Activated naive CD4-positive, alpha-beta T cell treated with anti-CD3 and anti-CD28 coated beads, Interleukin-2, amount 10 ng/mL, durations not matched to agents 7 days and 5 days (primary cell): ENCODE measurements at regions of chr10 and their contacts with region 1.

Region 1: DNA sequence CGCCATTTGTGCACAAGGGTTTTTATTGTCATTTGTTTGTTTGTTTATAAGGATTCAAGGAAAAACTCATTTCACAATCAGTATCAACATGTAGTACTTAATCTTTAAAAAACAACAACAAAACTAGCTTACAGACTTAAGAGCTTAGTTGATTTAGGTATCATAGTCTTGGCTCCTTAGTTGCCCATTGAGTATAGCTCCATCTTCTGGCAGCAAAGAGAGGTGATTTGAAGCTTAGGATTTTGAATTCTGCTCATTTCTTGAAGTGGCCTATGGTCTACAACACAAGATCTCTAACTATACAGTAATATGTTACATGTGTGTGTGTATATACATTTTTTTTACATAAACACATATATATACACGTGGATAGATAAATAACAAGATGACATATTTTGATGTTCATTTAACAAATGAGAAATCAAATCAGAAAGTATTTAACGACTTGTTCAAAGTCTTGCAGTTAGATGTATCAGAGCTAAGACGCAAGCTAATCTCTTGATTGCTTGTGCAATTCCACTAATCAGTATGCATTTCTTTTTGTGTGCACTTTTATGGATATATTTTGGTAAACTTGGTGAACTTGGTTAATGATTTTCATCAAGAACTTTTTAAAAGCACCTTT is 307.3 kb downstream of the CAMK1D start:
- DNase-seq: no peak
- H3K4me3 Mint-ChIP-seq: no peak overlapping the region
- H3K27ac Mint-ChIP-seq: no peak overlapping the region
- H3K4me1 Mint-ChIP-seq: peaks cover 3% of the 10 kb centered on the region
- H3K27me3 Mint-ChIP-seq: no peaks in the 10 kb centered on the region

Region 2: GRCh38 chr10:12214763-12215218 is 441.8 kb before region 1 on chr10:
- CTCF ChIA-PET with region 1: interaction called, 14 read pairs
- DNase-seq: peak; percentile 49
- H3K4me3 Mint-ChIP-seq: peak overlapping the region; percentile 27
- H3K27ac Mint-ChIP-seq: peak overlapping the region; percentile 74
- H3K4me1 Mint-ChIP-seq: peaks cover 7% of the 10 kb centered on the region
- H3K27me3 Mint-ChIP-seq: no peaks in the 10 kb centered on the region

Region 3: GRCh38 chr10:12264204-12264940 is 392.3 kb before region 1 on chr10:
- CTCF ChIA-PET with region 1: interaction called, 69 read pairs
- DNase-seq: peak; percentile 75
- H3K4me3 Mint-ChIP-seq: peak overlapping the region; percentile 29
- H3K27ac Mint-ChIP-seq: no peak overlapping the region
- H3K4me1 Mint-ChIP-seq: peaks cover 24% of the 10 kb centered on the region
- H3K27me3 Mint-ChIP-seq: peaks cover 5% of the 10 kb centered on the region

Region 4: DNA sequence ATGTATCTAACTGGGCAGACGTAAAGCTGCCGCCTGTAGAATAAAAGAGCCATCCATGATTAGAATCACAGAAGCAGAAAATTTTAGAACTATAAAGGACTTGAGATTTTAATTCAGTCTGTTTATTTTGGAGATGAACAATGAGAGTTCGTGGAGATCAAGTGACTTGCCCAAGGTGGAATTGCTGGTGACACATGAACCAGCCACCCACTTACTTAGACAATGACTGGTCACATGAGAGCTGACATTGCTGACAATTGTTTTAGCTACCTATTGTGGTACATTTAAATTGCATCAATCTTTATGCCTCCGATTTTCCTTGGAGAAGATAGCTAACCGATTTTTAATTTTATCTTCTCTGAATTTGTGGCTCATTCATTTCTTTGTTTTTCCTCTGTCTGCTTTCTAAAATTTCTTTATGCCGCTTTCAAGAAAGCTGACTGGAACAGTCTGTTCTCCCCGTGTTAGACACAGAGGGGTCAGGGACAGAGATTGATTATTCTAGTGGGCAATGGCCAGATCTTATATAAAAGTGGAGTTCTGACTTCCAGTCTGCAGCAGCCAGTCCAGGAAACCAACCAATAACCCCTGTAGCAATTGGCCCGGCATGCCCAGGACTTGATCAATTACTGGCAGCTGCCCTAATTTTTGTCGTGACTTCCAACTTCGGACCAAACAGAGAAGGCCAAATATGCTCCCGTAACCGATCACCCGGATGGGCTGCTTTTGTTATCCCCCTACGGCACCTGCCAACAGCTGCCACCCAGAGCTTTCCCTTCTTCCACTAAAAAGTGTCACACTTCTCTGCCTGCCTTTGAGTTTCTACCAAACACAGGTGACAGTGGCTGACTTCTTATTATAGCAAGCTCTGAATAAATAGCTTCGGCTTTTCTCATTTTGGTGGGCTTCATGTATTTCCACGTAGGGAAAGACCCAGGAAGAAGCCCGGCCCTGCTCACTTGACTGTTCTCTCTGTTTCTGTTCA is 65.7 kb before region 1 on chr10:
- CTCF ChIA-PET with region 1: interaction called, 10 read pairs
- DNase-seq: no peak
- H3K4me3 Mint-ChIP-seq: no peak overlapping the region
- H3K27ac Mint-ChIP-seq: no peak overlapping the region
- H3K4me1 Mint-ChIP-seq: peaks cover 89% of the 10 kb centered on the region
- H3K27me3 Mint-ChIP-seq: peaks cover 3% of the 10 kb centered on the region

Region 5: GRCh38 chr10:12597788-12598765 is 58.6 kb before region 1 on chr10:
- CTCF ChIA-PET with region 1: interaction called, 10 read pairs
- DNase-seq: no peak
- H3K4me3 Mint-ChIP-seq: no peak overlapping the region
- H3K27ac Mint-ChIP-seq: no peak overlapping the region
- H3K4me1 Mint-ChIP-seq: peaks cover 53% of the 10 kb centered on the region
- H3K27me3 Mint-ChIP-seq: peaks cover 4% of the 10 kb centered on the region

Region 6: GRCh38 chr10:12628153-12628552 is 28.5 kb before region 1 on chr10:
- CTCF ChIA-PET with region 1: no interaction called
- DNase-seq: no peak
- H3K4me3 Mint-ChIP-seq: no peak overlapping the region
- H3K27ac Mint-ChIP-seq: no peak overlapping the region
- H3K4me1 Mint-ChIP-seq: peaks cover 2% of the 10 kb centered on the region
- H3K27me3 Mint-ChIP-seq: no peaks in the 10 kb centered on the region

Region 7: DNA sequence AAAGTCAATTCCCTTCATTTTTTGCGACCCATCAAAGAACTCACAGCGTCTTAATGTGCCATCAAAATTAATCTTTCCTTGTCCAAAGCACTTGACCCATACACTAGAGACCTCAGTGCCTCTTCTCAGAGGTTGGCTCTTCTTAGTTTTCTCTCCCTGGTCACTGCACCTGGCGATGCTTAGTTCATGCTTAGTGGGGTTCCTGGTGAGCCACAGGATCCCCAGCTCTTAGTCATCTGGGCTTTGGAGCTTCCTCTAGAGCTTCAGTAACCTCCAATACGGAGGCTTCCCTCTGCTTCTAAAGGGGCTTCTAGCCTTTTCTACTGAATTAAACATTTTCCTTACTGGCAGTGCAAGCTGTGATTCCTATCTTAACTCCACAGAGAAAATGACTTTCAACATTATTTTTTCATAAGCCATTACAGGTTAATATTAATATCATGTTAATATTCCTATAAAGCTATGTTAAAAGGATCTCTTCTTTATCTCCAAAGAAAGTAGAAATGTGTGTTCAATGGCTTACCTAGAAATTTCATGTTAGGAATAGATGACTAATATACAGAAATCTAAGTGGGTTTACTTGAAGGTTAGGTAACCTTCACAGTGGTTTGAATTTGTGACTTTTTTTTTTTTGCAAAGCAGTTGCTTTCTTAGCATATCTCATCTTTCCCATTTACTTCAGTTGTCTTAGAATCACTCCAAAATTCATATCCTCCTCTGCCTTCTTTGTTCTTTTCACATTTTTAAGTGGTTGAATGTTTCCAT is 12.1 kb before region 1 on chr10:
- CTCF ChIA-PET with region 1: interaction called, 11 read pairs
- DNase-seq: no peak
- H3K4me3 Mint-ChIP-seq: no peak overlapping the region
- H3K27ac Mint-ChIP-seq: peak overlapping the region; percentile 35
- H3K4me1 Mint-ChIP-seq: peaks cover 2% of the 10 kb centered on the region
- H3K27me3 Mint-ChIP-seq: no peaks in the 10 kb centered on the region

Region 8: DNA sequence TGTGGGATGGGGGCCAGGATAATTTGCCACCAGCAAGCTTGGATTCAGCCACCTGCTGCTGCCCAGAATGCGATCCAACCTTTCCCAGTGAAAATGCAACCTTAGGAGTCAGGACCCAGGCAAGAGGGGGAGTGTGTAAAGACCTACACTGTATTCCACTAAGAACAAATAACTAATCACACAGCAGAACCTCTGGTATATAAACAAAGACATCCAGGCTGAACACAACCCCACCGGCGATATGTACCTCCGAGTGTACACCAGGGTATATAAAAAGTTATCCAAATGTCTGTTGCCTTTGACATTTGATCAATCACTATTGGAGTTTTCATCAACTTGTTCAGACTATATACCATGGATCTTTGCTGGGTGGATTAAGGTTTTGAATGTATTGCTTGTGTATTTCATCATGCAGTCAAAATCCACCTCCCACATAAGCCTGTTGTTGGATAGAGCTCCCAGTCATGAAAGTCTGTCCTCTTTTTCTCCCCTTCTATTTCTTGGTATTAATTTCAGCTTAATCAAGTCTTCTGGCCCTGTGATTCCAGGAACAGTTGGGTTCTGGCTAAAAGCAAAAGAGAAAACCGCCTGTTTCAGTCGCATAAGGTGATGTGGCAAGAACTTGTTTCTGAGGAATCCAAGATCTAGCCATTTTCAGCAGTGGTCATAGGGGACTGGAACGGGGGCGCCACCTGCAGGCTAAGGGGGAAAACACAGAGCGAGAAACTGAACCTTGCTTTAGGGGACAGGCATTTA is 54.1 kb after region 1 on chr10:
- CTCF ChIA-PET with region 1: interaction called, 15 read pairs
- DNase-seq: peak; percentile 84
- H3K4me3 Mint-ChIP-seq: no peak overlapping the region
- H3K27ac Mint-ChIP-seq: no peak overlapping the region
- H3K4me1 Mint-ChIP-seq: peaks cover 22% of the 10 kb centered on the region
- H3K27me3 Mint-ChIP-seq: no peaks in the 10 kb centered on the region